ENCODE measurements at regions of chr1 and their contacts with region 1.

Region 1: DNA sequence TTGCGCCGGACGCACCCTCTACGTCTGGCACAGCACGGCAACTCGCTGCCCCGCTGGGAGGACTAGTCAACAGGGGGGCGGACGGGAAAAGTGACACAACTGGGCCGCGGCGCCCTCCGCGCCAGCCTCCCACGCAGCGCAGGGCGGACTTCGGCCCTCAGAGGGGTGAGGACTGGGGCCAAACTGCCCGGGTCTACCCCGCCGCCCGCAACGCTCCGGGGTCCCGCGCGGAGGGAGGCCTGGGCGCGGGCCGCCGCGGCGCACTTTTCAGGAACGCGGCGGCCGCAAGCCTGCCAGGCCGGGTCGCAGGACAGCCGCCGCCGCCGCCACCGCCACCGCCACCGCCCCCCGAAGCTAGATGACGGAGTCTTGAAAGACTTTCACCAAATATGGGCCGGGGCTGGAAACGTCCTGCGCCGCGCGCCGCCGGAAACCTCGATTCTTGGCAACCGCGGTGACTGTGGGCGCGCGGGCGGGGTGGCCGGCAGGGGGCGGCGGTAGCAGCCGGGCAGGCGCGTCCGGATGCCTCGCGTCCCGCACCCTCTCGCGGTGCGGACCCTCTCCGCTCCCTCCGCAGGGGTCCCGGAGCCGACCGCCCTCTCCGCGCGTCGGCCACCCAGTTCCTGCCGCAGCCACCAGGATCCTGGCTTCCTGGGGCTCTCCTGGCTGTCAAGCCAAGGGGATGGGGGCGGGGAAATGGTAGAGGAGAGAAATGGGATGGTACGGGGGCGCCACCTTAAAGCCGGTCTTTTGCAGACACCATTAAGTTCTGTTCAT is 3.7 kb upstream of the CCN1 start:
- DNase-seq: no peak
- H3K4me3 ChIP-seq: peak overlapping the region; percentile 76
- H3K27me3 ChIP-seq: no peaks in the 10 kb centered on the region
- CTCF ChIP-seq: peak; percentile 36

Region 2: GRCh38 chr1:85244271-85245061 is 332.4 kb before region 1 on chr1:
- CTCF ChIA-PET with region 1: no interaction called
- POLR2A ChIA-PET with region 1: no interaction called
- DNase-seq: peak; percentile 65
- H3K4me3 ChIP-seq: no peak overlapping the region
- H3K27me3 ChIP-seq: no peaks in the 10 kb centered on the region
- CTCF ChIP-seq: 0 out of 2 replicates have a peak, but pooled peaks have one; percentile 12

Region 3: DNA sequence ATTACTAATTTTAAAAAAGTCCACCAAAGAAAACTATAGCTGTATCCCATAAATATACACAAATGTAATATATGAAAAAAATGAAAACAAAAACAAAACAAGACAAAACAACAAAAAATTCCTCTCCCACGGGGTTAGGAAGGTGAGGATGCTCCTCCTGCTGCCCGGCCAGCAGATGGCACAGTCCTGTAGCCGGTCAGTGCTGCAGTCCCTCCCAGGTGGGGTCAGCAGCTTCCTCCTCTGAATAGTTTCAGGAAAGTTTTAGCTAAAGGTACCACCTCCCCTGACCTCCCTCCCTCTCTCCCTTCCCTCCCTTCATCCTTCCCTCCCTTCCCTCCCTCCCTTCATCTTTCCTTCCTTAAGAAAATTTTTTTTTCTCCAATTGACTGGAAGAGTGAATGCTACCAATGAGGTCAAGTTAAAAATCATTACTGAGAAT is 232.6 kb before region 1 on chr1:
- CTCF ChIA-PET with region 1: interaction called, 5 read pairs
- POLR2A ChIA-PET with region 1: interaction called, 12 read pairs
- DNase-seq: no peak
- H3K4me3 ChIP-seq: no peak overlapping the region
- H3K27me3 ChIP-seq: no peaks in the 10 kb centered on the region
- CTCF ChIP-seq: peak; percentile 80

Region 4: DNA sequence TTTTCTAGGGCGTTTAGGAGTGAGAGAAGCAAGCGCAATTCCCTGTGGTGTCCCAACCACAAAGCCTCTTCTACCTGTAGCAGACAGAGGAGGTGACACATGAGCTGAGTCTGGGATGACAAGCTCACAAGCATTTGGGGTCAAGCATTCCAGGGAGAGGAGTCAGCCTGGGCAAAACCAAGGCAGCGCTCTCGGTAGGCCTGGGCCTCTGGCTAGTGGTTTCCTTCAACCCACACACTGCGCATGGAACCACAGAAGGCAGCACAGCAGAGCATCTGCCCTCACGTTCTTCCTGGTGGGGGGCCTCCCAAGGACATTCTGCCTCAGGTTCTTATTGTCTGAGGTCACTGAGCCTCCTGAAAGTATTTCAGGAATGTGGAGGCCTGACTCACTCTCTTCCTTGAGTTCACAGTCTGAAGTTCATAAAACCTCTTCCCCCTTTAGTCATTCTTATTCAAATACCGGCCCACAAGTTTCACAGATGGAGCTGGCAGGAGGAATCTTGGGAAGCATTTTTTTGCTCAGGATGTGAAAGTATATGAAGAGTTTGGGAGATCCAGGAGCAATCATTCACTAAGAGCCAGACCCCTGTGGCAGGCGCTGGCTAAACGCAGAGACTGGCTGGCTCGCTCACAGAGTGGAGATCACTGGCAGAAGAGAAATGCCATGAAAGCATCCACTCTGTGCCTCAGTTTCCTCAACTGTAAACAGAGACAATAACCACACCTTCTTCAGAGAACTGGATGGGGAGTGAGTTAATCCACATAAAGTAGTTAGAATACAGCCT is 30.5 kb after region 1 on chr1:
- CTCF ChIA-PET with region 1: interaction called, 8 read pairs
- POLR2A ChIA-PET with region 1: interaction called, 20 read pairs
- DNase-seq: peak; percentile 99
- H3K4me3 ChIP-seq: no peak overlapping the region
- H3K27me3 ChIP-seq: no peaks in the 10 kb centered on the region
- CTCF ChIP-seq: no peak

Measured in BJ (cell line).